PC-3 (cell line): ENCODE measurements at regions of chr3 and their contacts with region 1.

Region 1: GRCh38 chr3:106609666-106610301 is 741.0 kb upstream of the CBLB start:
- DNase-seq: peak; percentile 89
- ATAC-seq: peak; percentile 80
- H3K4me3 ChIP-seq: no peak overlapping the region
- H3K27ac ChIP-seq: no peak overlapping the region
- H3K4me1 ChIP-seq: peaks cover 31% of the 10 kb centered on the region
- H3K27me3 ChIP-seq: no peaks in the 10 kb centered on the region
- CTCF ChIP-seq: peak; percentile 96

Region 2: GRCh38 chr3:105686278-105686897 is 923.4 kb before region 1 on chr3:
- CTCF ChIA-PET with region 1: no interaction called
- POLR2A ChIA-PET with region 1: no interaction called
- intact Hi-C with region 1: loop called (anchors 1 kb)
- DNase-seq: peak; percentile 59
- ATAC-seq: no peak
- H3K4me3 ChIP-seq: no peak overlapping the region
- H3K27ac ChIP-seq: no peak overlapping the region
- H3K4me1 ChIP-seq: no peaks in the 10 kb centered on the region
- H3K27me3 ChIP-seq: no peaks in the 10 kb centered on the region
- CTCF ChIP-seq: peak; percentile 93

Region 3: GRCh38 chr3:106013971-106014370 is 595.8 kb before region 1 on chr3:
- CTCF ChIA-PET with region 1: no interaction called
- POLR2A ChIA-PET with region 1: no interaction called
- intact Hi-C with region 1: loop called (anchors 10 kb)
- DNase-seq: peak; percentile 98
- ATAC-seq: peak; percentile 97
- H3K4me3 ChIP-seq: no peak overlapping the region
- H3K27ac ChIP-seq: peak overlapping the region; percentile 95
- H3K4me1 ChIP-seq: peaks cover 22% of the 10 kb centered on the region
- H3K27me3 ChIP-seq: no peaks in the 10 kb centered on the region
- CTCF ChIP-seq: no peak

Region 4: GRCh38 chr3:106215047-106215446 is 394.7 kb before region 1 on chr3:
- CTCF ChIA-PET with region 1: no interaction called
- POLR2A ChIA-PET with region 1: no interaction called
- intact Hi-C with region 1: loop called (anchors 2 kb)
- DNase-seq: no peak
- ATAC-seq: no peak
- H3K4me3 ChIP-seq: no peak overlapping the region
- H3K27ac ChIP-seq: no peak overlapping the region
- H3K4me1 ChIP-seq: peaks cover 11% of the 10 kb centered on the region
- H3K27me3 ChIP-seq: no peaks in the 10 kb centered on the region
- CTCF ChIP-seq: no peak

Region 5: DNA sequence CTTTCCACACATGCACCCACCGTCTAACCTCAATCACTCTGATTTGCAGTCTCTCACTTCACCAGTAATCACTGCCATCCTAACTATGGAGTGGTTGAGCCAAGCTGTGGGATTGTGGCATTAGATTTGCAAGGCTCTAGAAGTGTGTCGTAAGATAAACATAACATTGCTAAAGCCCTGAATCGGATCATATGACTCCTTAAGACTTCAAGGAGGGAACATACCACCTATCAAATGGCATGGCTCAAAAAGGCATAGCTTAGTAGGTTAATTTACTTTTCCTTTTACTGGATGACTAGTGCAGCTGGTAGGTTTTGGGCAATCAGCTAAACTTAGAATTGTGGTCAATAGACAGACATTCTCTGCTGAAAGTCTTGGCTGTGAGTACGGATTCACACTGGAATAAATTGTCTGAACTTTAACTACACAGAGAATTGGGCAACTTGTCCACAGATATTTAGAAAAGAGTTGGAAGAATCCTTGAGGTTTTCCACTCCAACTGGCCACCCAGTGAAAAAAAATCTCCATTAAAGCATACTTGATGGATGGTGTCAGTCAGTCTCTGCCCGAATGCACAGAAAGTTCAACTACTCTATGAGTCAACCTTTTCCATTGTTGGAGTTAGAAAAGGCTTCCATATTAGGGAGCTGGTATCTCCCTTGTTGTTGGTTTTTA is 264.3 kb before region 1 on chr3:
- CTCF ChIA-PET with region 1: no interaction called
- POLR2A ChIA-PET with region 1: no interaction called
- intact Hi-C with region 1: loop called (anchors 5 kb)
- DNase-seq: peak; percentile 92
- ATAC-seq: peak; percentile 87
- H3K4me3 ChIP-seq: no peak overlapping the region
- H3K27ac ChIP-seq: peak overlapping the region; percentile 83
- H3K4me1 ChIP-seq: peaks cover 23% of the 10 kb centered on the region
- H3K27me3 ChIP-seq: no peaks in the 10 kb centered on the region
- CTCF ChIP-seq: no peak

Region 6: GRCh38 chr3:106457286-106458180 is 152.3 kb before region 1 on chr3:
- CTCF ChIA-PET with region 1: interaction called, 3 read pairs
- POLR2A ChIA-PET with region 1: no interaction called
- intact Hi-C with region 1: loop called (anchors 5 kb)
- DNase-seq: peak; percentile 96
- ATAC-seq: peak; percentile 100
- H3K4me3 ChIP-seq: no peak overlapping the region
- H3K27ac ChIP-seq: no peak overlapping the region
- H3K4me1 ChIP-seq: peaks cover 8% of the 10 kb centered on the region; the same call in 1 of the 2 replicates
- H3K27me3 ChIP-seq: no peaks in the 10 kb centered on the region
- CTCF ChIP-seq: no peak

Region 7: DNA sequence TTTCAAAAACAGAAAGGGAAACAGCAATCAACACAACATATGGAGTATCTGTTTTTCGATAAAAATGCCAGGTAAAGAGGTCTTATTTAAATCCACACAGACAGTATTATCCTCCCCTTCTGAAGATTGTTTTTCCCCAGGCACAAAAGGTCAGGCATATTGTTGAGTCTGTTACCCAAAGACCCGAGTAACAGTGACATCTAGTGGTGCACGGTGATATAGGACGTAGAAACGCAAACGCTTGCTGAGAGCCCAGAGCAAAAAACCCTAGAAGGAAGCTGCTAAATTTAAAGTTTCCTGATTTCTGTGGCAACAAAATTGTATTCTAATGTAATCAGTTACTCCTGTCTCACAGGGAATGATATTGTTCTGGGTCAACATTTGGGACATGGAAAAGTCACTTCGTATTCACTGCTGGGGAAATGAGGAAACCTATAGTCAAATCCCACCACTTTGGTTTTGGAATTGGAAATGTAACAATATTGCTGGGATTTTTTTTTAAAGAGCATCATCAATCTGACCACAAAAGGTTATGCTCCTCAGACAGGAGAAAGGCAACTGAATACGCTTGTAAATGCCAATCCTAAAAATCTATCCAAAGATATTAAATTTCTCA is 454.8 kb after region 1 on chr3:
- CTCF ChIA-PET with region 1: no interaction called
- POLR2A ChIA-PET with region 1: no interaction called
- intact Hi-C with region 1: loop called (anchors 1 kb)
- DNase-seq: peak; percentile 91
- ATAC-seq: peak; percentile 84
- H3K4me3 ChIP-seq: no peak overlapping the region
- H3K27ac ChIP-seq: no peak overlapping the region
- H3K4me1 ChIP-seq: peaks cover 16% of the 10 kb centered on the region
- H3K27me3 ChIP-seq: no peaks in the 10 kb centered on the region
- CTCF ChIP-seq: peak; percentile 95